ENCODE measurements at regions of chr7 and their contacts with region 1.

Region 1: DNA sequence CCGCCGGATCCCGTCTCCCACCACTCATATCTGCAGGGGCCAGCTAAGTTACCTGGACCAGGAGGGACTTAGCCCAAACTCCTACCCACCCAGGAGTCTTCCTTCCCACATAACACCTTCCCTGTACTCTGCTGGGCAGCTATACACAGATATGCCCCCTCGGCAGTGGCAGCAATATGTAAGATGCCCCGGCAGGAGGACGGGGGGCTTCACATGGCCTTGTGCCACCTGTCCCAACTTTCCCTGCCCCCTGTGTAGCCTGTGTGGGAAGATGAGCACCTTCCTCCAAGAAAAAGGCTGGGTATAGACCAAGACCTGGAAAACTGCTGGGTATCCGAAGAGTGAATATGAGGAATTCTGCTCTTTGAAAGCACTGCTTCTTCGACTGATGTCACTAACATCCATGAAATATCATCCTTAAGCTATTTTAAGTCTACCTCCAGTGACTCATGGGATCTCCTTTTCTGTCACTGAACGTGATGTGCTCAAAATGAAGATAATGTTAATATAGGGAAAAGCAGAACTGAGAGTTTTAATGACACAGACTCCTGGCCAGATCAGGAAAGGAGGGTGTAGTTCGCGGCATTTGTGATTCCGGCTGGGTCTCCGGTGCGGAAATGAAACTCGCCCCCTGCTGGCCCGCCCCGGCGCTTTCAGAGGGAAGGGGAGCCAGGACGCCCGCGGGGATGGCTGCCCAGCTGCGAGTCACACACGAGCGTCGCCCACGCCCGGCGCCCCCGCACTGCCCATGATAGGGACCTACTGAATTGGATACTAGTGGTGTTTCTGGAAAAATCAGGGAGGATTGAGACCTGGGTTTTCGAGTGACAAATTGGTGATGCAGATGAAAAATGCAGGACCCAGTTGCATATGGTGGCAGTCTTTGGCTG is 256.9 kb upstream of the NFE2L3 start:
- DNase-seq: peak; percentile 65
- ATAC-seq: peak; percentile 77
- H3K4me3 Mint-ChIP-seq: peak overlapping the region; percentile 24
- H3K27ac Mint-ChIP-seq: no peak overlapping the region
- H3K4me1 Mint-ChIP-seq: peaks cover 35% of the 10 kb centered on the region
- H3K27me3 Mint-ChIP-seq: peaks cover 26% of the 10 kb centered on the region

Region 2: DNA sequence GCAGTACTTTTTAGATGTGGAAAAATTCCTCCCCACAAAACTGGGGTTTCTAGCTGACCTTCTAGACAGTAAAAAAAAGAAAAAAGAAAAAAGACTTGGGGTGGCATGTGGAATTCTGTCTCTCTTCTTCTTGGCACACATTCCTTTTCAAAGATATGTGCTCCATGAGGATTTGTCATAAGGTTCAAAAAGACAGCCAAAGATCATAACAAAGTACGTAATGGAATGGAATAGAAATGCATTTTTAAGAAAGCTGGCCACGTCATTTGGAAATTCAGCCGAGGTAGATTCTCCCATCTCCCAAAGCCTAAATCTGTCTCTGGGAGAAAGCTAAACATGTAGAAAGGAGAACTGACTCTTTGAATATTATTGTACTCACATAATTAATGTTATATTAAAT is 124.5 kb before region 1 on chr7:
- CTCF ChIA-PET with region 1: no interaction called
- POLR2A ChIA-PET with region 1: no interaction called
- DNase-seq: no peak
- ATAC-seq: no peak
- H3K4me3 Mint-ChIP-seq: no peak overlapping the region
- H3K27ac Mint-ChIP-seq: no peak overlapping the region
- H3K4me1 Mint-ChIP-seq: no peaks in the 10 kb centered on the region
- H3K27me3 Mint-ChIP-seq: peaks cover 3% of the 10 kb centered on the region

Region 3: GRCh38 chr7:26061688-26062150 is 166.6 kb after region 1 on chr7:
- CTCF ChIA-PET with region 1: interaction called, 65 read pairs
- POLR2A ChIA-PET with region 1: no interaction called
- DNase-seq: peak; percentile 79
- ATAC-seq: peak; percentile 84
- H3K4me3 Mint-ChIP-seq: no peak overlapping the region
- H3K27ac Mint-ChIP-seq: no peak overlapping the region
- H3K4me1 Mint-ChIP-seq: peaks cover 13% of the 10 kb centered on the region
- H3K27me3 Mint-ChIP-seq: peaks cover 17% of the 10 kb centered on the region

Region 4: DNA sequence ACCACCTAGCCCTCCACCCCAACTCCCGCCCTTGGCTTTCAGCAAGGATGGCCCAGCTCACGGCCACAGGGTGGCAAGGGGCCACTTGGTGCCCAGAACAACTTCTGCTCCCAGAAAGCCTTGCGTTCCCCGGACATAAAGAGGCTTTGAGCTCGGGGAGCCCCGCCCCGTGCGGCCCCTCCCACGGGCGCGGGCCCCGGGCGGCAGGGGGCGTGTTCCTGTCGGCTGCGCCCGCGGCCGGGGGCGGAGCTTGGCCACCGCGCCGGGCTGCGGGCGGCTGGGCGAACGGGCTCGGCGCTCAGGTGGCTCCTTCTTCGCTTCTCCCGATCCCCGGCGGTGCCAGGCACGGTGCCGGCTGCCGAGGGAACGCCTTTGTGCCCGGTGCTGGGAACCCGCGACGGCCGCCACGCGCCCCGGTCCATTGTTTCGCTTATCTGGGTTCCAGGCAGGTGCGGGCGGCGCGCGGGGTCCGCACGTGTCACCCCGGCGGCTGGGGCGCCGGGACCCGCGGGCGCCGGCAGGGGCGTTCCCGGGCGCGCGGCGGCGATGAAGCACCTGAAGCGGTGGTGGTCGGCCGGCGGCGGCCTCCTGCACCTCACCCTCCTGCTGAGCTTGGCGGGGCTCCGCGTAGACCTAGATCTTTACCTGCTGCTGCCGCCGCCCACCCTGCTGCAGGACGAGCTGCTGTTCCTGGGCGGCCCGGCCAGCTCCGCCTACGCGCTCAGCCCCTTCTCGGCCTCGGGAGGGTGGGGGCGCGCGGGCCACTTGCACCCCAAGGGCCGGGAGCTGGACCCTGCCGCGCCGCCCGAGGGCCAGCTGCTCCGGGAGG is 257.0 kb after region 1 on chr7 and contains the start of gene NFE2L3:
- CTCF ChIA-PET with region 1: interaction called, 10 read pairs
- POLR2A ChIA-PET with region 1: no interaction called
- DNase-seq: peak; percentile 87
- ATAC-seq: peak; percentile 76
- H3K4me3 Mint-ChIP-seq: peak within 1 kb of the TSS; percentile 92
- H3K27ac Mint-ChIP-seq: peak within 1 kb of the TSS; percentile 98
- H3K4me1 Mint-ChIP-seq: peaks cover 64% of the 10 kb centered on the region
- H3K27me3 Mint-ChIP-seq: no peaks in the 10 kb centered on the region
- total RNA-seq, gene NFE2L3: 9.7 to 10.4 TPM

Region 5: DNA sequence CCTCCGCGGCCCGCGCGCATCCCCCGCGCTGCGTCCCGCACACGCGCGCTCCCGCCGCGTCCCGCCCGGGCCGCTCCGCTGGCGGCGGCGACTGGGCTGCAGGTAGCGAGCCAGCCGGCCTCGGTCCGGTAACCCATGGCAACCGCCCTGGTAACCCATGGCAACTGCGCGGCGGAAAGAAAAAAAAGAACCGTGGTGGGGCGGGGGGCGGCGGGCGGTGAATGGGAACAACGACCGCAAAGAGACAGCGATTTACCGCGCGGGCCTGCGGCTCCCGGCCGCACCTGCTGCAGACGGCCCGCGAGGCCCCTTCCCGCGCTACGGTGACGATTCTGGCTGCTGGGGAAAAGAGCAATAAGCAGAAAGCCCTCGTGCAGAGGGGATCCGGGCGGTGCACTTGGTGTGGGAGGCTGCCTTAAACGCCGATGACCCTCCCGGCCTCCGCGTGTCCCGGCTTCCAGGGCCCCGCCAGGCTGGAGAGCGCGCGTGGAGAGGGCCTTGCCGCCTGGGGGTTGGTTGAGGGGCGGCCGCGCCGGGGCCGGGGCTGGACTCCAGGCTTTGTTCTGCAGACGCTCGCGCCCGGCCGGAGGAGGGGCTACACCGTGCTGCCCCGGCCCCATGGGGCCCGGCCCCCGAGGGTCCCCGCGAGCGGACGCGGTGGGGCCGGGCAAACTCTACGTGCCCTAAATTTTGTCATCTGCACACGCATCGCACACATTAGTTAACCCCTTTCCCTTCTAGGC is 481.2 kb after region 1 on chr7:
- CTCF ChIA-PET with region 1: interaction called, 11 read pairs
- POLR2A ChIA-PET with region 1: no interaction called
- DNase-seq: peak; percentile 48
- ATAC-seq: peak; percentile 62
- H3K4me3 Mint-ChIP-seq: peak overlapping the region; percentile 73
- H3K27ac Mint-ChIP-seq: no peak overlapping the region
- H3K4me1 Mint-ChIP-seq: peaks cover 10% of the 10 kb centered on the region
- H3K27me3 Mint-ChIP-seq: peaks cover 21% of the 10 kb centered on the region

Measured in activated CD8-positive, alpha-beta T cell treated with anti-CD3 and anti-CD28 coated beads, Interleukin-2, amount 10 ng/mL, durations not matched to agents 7 days and 5 days (primary cell).